GM23248 (cell line): ENCODE measurements at regions of chr6 and their contacts with region 1.

Region 1: GRCh38 chr6:154928325-154928922 is 66.7 kb upstream of the TIAM2 start:
- DNase-seq: peak; percentile 83
- H3K4me3 ChIP-seq: no peak overlapping the region
- H3K27ac ChIP-seq: no peak overlapping the region
- H3K4me1 ChIP-seq: peaks cover 22% of the 10 kb centered on the region
- H3K27me3 ChIP-seq: no peaks in the 10 kb centered on the region

Region 2: GRCh38 chr6:154510143-154510905 is 418.1 kb before region 1 on chr6 and contains the start of gene CNKSR3:
- in situ Hi-C with region 1: no loop called
- DNase-seq: peak; percentile 90
- H3K4me3 ChIP-seq: peak within 1 kb of the TSS; percentile 85
- H3K27ac ChIP-seq: peak within 1 kb of the TSS; percentile 84
- H3K4me1 ChIP-seq: peaks cover 9% of the 10 kb centered on the region
- H3K27me3 ChIP-seq: no peaks in the 10 kb centered on the region
- total RNA-seq, gene CNKSR3: 1.7 and 2.4 TPM in 2 replicates

Region 3: DNA sequence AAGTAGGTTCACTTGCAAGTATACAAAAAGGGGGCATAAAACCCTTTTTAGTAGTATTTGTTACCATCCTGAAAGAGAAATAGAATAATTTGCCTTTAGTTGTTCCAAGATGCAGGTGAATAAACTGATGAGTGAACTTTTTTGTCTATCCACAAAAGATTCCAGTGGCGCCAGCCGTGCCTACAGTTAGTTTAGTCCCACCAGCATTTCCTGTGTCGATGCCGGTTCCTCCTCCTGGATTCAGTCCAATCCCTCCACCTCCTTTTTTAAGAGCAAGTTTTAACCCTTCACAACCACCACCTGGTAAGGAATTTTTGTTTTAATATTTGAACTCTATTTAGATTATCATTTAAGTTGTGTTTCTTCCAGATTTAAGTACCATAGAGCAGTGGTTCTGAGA is 104.3 kb before region 1 on chr6:
- in situ Hi-C with region 1: no loop called
- DNase-seq: no peak
- H3K4me3 ChIP-seq: no peak overlapping the region
- H3K27ac ChIP-seq: no peak overlapping the region
- H3K4me1 ChIP-seq: no peaks in the 10 kb centered on the region
- H3K27me3 ChIP-seq: no peaks in the 10 kb centered on the region

Region 4: GRCh38 chr6:155248008-155249001 is 319.9 kb after region 1 on chr6:
- in situ Hi-C with region 1: loop called (anchors 10 kb)
- DNase-seq: peak; percentile 78
- H3K4me3 ChIP-seq: no peak overlapping the region
- H3K27ac ChIP-seq: no peak overlapping the region
- H3K4me1 ChIP-seq: no peaks in the 10 kb centered on the region
- H3K27me3 ChIP-seq: no peaks in the 10 kb centered on the region